Activated CD4-positive, alpha-beta memory T cell treated with anti-CD3 and anti-CD28 coated beads for 36 hours (primary cell): ENCODE measurements at regions of chr2 and their contacts with region 1.

Region 1: GRCh38 chr2:144183727-144184126 is 336.2 kb downstream of the ZEB2 start:
- DNase-seq: peak; percentile 89
- H3K4me3 Mint-ChIP-seq: peak overlapping the region; percentile 52
- H3K27ac Mint-ChIP-seq: peak overlapping the region; percentile 87
- H3K4me1 Mint-ChIP-seq: peaks cover 37% of the 10 kb centered on the region
- H3K27me3 Mint-ChIP-seq: no peaks in the 10 kb centered on the region

Region 2: DNA sequence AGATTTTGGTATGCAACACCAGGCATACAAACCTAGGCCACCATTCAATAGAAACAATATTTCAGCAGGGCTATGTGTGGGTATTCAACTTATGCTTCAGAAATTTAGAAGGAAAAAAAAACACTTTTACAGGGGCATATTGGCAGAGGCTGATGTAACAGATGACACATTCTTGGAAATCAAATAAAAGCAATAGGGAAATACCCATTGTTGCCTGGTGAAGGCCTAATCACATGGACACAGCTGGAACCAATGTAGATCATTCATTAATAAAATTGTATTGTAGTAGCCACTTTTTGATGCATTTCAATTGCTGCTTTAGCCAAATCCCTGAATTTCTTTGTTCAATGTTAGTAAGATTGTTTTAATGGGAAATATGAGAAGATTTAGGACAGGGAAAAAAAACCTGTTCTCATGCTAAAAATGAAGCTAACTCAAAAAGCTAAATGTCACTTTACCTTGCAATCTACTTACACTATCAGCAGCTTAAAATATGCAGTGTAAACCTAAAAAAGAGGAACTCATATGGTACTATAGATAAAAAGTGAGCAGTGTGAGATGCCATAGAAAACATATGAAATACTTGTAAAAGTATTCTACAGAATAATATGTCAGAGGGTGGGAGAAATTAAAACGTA is 46.8 kb after region 1 on chr2:
- CTCF ChIA-PET with region 1: no interaction called
- POLR2A ChIA-PET with region 1: no interaction called
- intact Hi-C with region 1: loop called (anchors 1 kb)
- DNase-seq: no peak
- H3K4me3 Mint-ChIP-seq: no peak overlapping the region
- H3K27ac Mint-ChIP-seq: no peak overlapping the region
- H3K4me1 Mint-ChIP-seq: peaks cover 41% of the 10 kb centered on the region
- H3K27me3 Mint-ChIP-seq: no peaks in the 10 kb centered on the region